Activated CD4-positive, alpha-beta memory T cell treated with anti-CD3 and anti-CD28 coated beads for 36 hours (primary cell): ENCODE measurements at regions of chr12 and their contacts with region 1.

Region 1: DNA sequence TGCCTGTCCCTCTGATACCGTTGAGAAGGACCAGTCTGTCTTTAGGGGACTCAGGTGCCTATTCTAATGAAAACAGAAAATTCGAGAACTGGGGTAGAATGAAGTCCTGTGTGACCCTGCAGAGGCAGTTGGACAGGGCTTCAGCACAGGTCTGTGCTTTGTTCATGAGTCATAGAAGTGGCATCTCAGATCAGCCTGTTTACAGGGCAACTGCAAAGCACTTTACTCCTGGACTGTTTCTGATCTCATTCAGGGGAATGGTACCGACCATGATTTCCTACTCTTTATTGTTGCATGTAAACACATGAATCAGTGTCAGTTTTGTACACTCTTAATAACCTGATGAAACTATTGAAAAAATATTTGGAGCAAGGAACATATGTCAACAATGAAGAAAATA is 1517.0 kb downstream of the AACS start:
- DNase-seq: no peak
- H3K4me3 Mint-ChIP-seq: no peak overlapping the region
- H3K27ac Mint-ChIP-seq: no peak overlapping the region
- H3K4me1 Mint-ChIP-seq: no peaks in the 10 kb centered on the region
- H3K27me3 Mint-ChIP-seq: no peaks in the 10 kb centered on the region

Region 2: GRCh38 chr12:126506426-126507182 is 75.6 kb before region 1 on chr12:
- CTCF ChIA-PET with region 1: no interaction called
- POLR2A ChIA-PET with region 1: no interaction called
- intact Hi-C with region 1: loop called (anchors 10 kb)
- DNase-seq: no peak
- H3K4me3 Mint-ChIP-seq: no peak overlapping the region
- H3K27ac Mint-ChIP-seq: no peak overlapping the region
- H3K4me1 Mint-ChIP-seq: peaks cover 4% of the 10 kb centered on the region
- H3K27me3 Mint-ChIP-seq: no peaks in the 10 kb centered on the region